Colonic mucosa (tissue), 4 donors: ENCODE measurements at regions of chr19 and their contacts with region 1.

Region 1: DNA sequence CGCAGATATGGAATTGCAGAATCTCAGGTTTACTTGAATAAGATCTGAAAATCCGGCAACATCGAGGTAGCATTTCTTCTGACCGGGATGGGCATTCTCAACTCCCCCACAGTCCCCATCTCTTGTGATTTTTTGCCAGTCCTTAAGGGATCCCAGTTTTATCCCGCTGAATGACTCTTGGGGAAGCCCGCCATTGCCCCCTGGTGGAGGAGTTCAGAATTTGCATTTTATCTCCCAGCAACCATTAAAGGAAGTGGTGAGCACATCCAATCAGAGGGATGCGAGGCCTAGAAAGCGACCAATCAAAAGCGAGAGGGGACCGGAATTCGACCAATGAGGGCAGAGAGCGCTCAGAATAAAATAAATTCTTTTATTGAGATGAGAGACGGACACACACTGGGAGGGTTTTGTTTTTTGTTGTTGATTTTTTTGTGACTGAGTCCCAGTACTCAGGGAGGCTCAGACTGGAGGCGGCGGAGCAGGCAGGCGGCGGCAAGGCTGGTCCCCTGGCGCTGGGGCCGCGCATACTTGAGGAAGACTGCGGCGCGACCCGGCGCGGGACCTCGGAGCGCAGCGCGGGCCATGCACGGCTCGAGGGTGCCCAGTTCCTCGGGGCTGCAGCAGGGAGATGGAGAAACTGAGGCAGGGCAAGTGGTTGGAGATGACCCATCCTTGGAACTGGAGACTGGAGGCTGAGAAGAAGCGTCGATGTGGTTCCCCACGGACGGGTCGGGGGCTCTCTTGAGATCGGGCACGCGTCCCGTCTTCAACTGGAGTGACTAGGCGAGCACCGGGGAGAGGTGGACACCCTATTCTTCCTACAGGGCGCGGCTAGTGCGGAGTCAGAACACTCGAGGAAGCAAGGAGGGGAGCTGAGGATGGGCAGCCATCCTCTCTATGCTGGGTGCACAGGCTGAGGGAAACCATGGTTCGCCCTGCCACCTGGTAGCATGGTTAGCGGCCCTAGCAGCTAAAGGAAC is 4.0 kb upstream of the TTC9B start:
- DNase-seq: peak; percentile 78
- H3K4me3 ChIP-seq: no peak overlapping the region
- H3K27ac ChIP-seq: no peak overlapping the region
- H3K4me1 ChIP-seq: peaks cover 10% of the 10 kb centered on the region
- H3K27me3 ChIP-seq: peaks cover 53% of the 10 kb centered on the region
- CTCF ChIP-seq: peak; percentile 88

Region 2: DNA sequence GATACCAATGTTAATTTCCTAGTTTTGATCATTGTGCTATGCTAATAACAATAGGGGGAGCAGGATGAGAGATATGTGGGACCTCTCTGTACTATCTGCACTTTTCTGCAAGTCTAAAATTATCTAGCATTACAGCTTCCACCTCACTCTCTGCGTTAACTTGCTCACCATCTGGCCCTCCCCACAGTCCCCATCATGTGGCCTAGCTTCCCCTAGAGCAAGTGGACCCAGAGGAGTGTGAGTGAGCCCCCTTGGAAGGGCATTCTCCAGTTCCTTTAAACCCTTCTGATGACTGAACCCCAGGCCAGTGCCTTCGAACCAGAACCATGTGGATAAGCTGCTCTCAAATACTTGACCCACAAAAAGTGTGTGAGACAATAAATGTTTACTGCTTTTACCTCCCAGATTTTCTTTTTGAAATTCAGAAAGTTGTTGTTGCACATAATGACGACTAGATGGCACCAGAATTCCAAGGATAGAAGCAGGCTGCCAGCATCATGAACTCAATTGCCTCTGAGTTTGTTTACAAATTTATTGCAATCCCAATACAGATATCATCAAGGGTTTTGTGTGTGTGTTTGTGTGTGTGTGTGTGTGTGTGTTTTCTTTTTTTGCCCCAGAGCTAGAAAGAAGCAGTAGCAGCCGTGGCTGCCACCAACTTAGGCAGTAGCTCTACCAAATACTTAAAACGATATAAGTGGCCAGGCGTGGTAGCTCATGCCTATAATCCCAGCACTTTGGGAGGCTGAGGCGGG is 82.4 kb before region 1 on chr19:
- intact Hi-C with region 1: loop called (anchors 5 kb)
- DNase-seq: no peak
- H3K4me3 ChIP-seq: no peak overlapping the region
- H3K27ac ChIP-seq: no peak overlapping the region
- H3K4me1 ChIP-seq: no peaks in the 10 kb centered on the region
- H3K27me3 ChIP-seq: no peaks in the 10 kb centered on the region
- CTCF ChIP-seq: peak; percentile 55